Right lobe of liver (tissue), 6 donors: ENCODE measurements at regions of chr17 and their contacts with region 1.

Region 1: GRCh38 chr17:2380226-2380922 is 20.5 kb downstream of the MNT start:
- DNase-seq: no peak
- ATAC-seq: no peak
- H3K4me3 ChIP-seq: no peak overlapping the region
- H3K27ac ChIP-seq: no peak overlapping the region
- H3K4me1 ChIP-seq: peaks cover 0 to 18% (median 8%) of the 10 kb centered on the region in 4 donors
- H3K27me3 ChIP-seq: no peaks in the 10 kb centered on the region
- CTCF ChIP-seq: no peak
- POLR2A ChIP-seq: no peak

Region 2: DNA sequence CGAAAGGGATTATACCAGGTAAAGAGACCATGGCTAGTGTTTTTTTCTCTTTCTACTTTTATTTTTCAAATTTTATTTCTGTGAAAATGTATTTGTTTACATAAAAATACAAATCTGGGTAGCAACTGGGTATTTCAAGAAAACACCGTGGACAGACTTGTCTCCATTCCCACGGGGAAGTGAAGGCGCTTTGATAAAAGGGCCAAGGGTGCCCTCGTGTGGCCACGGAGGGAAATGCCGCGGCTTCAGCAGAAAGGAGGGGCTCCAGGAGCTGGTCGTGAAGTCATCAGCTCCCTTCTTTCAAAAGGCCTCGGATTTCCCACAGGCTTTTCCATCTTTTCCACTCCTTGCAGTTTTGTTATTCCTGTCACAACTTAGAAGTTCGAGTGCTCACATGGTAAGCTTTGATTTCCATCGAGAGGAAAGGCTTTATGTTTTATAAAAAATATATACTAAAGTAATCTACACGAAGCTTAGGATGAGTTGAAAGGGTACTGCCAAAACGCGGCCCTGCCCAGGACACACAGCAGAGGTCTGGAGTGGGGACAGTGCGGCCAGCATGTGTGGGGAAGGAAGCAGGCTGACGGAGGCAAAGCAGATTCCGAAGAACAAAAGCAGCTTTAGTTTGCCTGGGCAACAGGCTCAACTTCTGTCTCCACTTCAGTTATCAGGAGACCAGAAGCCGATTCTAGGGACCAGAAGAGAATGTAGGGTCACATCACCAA is 35.8 kb after region 1 on chr17:
- intact Hi-C with region 1: loop called (anchors 2 to 5 kb)
- DNase-seq: peak; percentile 78 to 84 (median 84)
- ATAC-seq: peak; percentile 90 to 95 (median 92)
- H3K4me3 ChIP-seq: no peak overlapping the region
- H3K27ac ChIP-seq: no peak overlapping the region
- H3K4me1 ChIP-seq: no peaks in the 10 kb centered on the region
- H3K27me3 ChIP-seq: no peaks in the 10 kb centered on the region
- CTCF ChIP-seq: peak; percentile 91 to 99 (median 98)
- POLR2A ChIP-seq: no peak

Region 3: DNA sequence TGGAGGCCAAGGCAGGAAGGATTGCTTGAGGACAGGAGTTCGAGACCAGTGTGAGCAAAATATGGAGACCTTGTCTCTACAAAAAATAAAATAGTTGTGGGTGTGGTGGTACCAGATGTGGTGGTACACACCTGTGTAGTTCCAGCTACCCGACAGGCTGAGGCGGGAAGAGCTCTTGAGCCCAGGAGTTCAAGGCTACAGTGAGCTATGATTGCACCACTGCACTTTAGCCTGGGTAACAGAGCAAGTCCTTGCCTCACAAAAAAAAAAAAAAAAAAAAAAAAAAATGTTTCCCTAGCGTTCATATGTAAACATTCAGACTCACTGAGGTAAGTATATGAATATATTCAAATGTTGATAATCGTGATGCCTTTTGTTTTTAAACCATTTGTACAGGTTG is 291.7 kb after region 1 on chr17:
- intact Hi-C with region 1: no loop called
- DNase-seq: no peak
- ATAC-seq: peak in 2 of 4 donors; percentile 51 to 68
- H3K4me3 ChIP-seq: no peak overlapping the region
- H3K27ac ChIP-seq: no peak overlapping the region
- H3K4me1 ChIP-seq: no peaks in the 10 kb centered on the region
- H3K27me3 ChIP-seq: no peaks in the 10 kb centered on the region
- CTCF ChIP-seq: no peak
- POLR2A ChIP-seq: no peak